Testis (tissue), 5 donors: ENCODE measurements at regions of chr5 and their contacts with region 1.

Region 1: DNA sequence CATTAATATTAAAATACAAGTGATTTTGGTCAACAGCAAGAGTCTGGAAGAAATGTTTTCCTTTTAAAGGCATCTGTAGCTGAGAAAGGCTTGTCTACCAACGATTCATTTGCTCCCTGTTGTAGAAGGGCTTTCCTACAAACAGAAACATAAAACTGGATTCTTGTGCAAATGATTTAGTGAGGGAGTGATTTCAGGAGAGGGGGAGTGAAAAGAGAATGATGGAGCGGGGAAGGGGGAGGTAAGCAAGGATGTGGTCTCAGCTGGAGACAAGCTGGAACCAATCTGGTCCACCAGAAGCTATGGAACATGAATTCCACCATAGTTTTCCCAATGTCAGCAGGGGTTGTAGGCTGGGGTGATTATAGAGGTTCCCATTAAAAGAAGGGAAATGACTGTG is 196.3 kb downstream of the FBXO4 start:
- DNase-seq: no peak
- H3K4me3 ChIP-seq: no peak overlapping the region
- H3K27ac ChIP-seq: no peak overlapping the region
- H3K4me1 ChIP-seq: no peaks in the 10 kb centered on the region
- H3K27me3 ChIP-seq: no peaks in the 10 kb centered on the region
- CTCF ChIP-seq: no peak
- POLR2A ChIP-seq: no peak

Region 2: DNA sequence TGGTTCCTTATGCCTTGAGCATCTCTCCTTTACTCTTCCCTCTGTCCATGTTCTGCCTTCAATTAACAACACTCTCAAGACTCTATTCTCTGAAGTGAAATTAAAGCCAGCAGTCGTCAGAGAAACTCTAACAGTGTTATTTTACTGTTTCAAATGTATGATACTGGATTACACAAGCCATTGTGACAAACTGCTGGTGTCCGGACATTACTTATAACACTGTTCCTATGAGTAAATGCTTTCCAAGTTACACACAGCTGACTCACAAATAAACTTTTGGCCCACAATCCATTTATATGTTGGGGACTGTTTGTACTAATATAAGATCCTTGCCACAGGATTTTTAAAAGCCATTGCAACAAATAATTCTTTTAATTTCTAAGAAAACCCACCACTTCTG is 238.7 kb after region 1 on chr5:
- intact Hi-C with region 1: loop called (anchors 5 kb)
- DNase-seq: no peak
- H3K4me3 ChIP-seq: no peak overlapping the region
- H3K27ac ChIP-seq: no peak overlapping the region
- H3K4me1 ChIP-seq: no peaks in the 10 kb centered on the region
- H3K27me3 ChIP-seq: no peaks in the 10 kb centered on the region
- CTCF ChIP-seq: no peak
- POLR2A ChIP-seq: no peak